ENCODE measurements at regions of chr1 and their contacts with region 1.

Region 1: DNA sequence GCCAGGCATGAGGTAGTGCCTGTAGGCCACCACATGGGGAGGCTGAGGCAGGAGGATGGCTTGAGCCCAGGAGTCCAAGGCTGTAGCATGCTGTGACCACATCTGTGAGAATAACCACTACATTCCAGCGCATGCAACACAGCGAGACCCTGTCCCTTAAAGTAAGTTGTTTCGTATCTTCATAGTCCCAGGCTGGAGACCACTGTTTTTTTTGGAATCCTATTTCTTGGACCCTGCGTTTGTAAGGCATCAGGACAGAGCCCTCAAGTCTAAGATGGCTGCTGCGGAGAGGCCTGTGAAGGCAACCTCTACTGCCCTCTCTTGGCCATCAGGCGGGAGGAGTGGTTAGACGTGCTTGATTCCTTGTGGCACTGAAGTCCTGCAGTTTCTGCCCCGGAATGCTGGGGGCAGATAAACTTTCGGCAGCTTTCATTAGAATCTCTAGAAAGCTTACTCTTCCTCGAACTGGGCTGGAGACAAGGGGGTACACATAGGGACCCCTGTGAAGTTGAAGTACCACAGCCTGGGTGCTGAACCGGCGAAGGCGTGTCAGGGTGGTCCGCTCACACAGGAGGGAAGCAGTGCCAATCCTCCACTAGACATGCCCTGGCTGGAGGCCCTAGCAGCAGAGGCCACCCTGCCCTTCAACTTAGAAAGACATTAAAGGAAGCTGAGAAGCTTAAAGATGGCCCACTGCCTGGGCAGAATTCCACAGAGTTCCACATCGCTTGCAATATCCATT is 36.6 kb downstream of the RABIF start:
- DNase-seq: peak; percentile 36
- H3K4me3 ChIP-seq: no peak overlapping the region
- H3K27ac ChIP-seq: no peak overlapping the region
- H3K4me1 ChIP-seq: no peaks in the 10 kb centered on the region
- H3K27me3 ChIP-seq: no peaks in the 10 kb centered on the region
- CTCF ChIP-seq: peak; percentile 59 to 77

Region 2: DNA sequence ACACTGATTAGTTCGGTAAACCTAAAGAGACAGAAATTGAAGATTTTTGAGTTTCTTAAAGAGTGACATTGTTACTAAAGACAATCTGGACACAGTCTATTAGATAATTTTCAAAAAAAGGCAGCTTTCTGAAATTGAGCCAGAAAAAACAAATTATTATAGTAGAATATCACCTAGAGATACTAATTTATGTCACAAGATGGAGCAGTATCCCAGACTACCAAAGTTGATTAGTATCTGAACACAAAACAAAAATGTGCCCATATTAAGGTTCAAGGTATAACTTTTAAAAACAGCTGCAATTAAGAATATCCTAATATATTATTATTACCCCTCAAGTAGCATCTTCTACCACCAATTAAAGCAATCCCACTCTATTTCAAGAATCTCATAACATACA is 101.6 kb before region 1 on chr1:
- CTCF ChIA-PET with region 1: no interaction called
- dilution Hi-C with region 1: no loop called
- in situ Hi-C with region 1: no loop called
- intact Hi-C with region 1: loop called (anchors 2 kb)
- DNase-seq: no peak
- H3K4me3 ChIP-seq: no peak overlapping the region
- H3K27ac ChIP-seq: no peak overlapping the region
- H3K4me1 ChIP-seq: no peaks in the 10 kb centered on the region
- H3K27me3 ChIP-seq: no peaks in the 10 kb centered on the region
- CTCF ChIP-seq: peak in 1 of 2 donors; percentile 10

Region 3: DNA sequence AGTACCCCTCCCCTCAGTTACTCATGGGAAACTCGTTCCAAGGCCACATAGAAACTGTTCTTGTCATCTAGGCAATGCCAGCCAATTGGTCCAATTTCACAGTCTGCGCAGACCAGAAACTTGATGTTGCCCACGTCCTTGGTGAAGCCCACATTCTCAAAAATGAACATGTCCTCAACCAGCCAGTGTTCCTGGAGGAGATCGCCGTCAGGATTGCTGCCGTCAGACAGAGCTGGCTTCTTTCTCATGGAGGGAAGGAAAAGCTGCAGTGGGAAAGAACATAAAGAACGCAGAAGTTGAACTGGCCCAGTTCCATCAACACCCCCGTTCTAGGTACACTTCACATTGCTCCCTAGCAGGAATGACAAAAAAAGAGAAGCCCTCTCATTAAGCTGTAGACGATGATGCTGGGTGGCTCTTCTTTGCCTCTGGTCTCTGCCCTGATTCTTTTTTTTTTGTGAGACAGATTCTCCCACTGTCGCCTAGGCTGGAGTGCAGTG is 28.7 kb after region 1 on chr1:
- CTCF ChIA-PET with region 1: interaction called, 20 read pairs
- dilution Hi-C with region 1: no loop called
- in situ Hi-C with region 1: no loop called
- intact Hi-C with region 1: no loop called
- DNase-seq: no peak
- H3K4me3 ChIP-seq: no peak overlapping the region
- H3K27ac ChIP-seq: no peak overlapping the region
- H3K4me1 ChIP-seq: no peaks in the 10 kb centered on the region
- H3K27me3 ChIP-seq: no peaks in the 10 kb centered on the region
- CTCF ChIP-seq: no peak

Measured in mammary epithelial cell (primary cell).